ENCODE measurements at regions of chr19 and their contacts with region 1.

Region 1: DNA sequence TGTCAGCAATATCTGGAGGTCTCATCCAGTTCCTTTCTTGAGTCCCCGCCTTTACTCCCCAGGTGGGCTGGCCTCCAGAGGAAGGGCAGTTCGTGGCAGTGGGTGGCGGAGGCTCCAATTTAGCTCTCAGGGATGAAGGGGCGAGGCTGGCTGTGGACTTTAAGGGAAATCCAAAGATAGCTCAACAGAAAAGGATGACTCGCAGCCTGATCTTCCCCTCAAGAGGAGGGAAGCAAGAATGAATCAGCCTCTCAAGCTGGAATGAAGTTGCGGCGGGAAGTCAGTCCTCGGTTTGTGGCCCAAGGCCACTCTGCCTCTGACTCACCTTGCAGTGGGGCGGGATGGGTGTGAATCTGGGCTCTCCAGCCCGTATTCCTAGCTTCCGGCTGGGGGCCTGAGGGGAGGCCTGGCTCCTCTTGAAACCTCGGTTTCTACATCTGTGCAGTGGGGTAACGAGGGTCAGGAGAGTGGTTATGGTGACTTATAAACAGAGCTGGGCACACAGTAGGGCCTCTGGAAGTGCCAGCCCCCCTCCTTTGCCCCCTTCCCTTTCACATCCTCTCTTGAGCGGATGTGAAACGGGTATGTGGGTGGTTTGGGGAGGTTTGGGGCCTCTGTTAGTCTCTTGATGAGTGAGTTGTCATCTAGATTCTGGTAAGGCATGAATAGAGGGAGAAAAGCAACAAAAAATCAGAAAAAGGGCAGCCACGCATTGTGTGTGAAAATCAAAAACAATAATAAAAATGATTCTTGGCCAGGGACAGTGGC is 10.5 kb upstream of the SMG9 start:
- DNase-seq: peak; percentile 88
- H3K4me3 ChIP-seq: peak overlapping the region; percentile 56
- H3K27ac ChIP-seq: peak overlapping the region; percentile 96
- H3K4me1 ChIP-seq: peaks cover 74% of the 10 kb centered on the region
- CTCF ChIP-seq: no peak

Region 2: DNA sequence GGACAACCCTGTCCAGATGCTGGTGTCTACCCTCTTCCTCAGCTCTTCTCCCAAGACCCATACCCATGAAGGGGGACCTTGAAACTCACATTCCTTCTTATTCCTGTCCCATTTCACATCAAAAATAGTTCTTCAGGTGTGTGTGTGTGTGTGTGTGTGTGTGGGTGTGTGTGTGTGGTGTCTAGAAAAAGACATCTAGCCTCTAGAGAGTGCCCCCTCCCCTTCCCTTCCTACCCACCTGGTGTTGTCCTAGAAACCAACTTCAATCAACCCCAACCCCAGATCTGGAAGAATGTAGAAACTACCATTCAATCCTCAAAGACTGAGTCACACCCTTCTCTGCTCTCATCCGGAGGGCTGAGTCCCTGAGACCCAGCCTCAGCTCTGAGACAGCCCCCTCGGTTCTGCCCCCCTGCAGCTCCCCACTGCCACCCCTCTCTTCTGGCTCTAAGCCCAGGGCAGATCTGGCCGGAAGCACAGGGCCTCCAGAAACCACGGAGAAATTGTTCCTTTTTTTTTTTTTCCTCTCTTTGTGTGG is 11.9 kb after region 1 on chr19:
- CTCF ChIA-PET with region 1: interaction called, 18 read pairs
- POLR2A ChIA-PET with region 1: interaction called, 49 read pairs
- intact Hi-C with region 1: loop called (anchors 1 kb)
- DNase-seq: peak; percentile 82
- H3K4me3 ChIP-seq: peak overlapping the region; percentile 78
- H3K27ac ChIP-seq: peak overlapping the region; percentile 91
- H3K4me1 ChIP-seq: peaks cover 68% of the 10 kb centered on the region
- CTCF ChIP-seq: no peak

Region 3: DNA sequence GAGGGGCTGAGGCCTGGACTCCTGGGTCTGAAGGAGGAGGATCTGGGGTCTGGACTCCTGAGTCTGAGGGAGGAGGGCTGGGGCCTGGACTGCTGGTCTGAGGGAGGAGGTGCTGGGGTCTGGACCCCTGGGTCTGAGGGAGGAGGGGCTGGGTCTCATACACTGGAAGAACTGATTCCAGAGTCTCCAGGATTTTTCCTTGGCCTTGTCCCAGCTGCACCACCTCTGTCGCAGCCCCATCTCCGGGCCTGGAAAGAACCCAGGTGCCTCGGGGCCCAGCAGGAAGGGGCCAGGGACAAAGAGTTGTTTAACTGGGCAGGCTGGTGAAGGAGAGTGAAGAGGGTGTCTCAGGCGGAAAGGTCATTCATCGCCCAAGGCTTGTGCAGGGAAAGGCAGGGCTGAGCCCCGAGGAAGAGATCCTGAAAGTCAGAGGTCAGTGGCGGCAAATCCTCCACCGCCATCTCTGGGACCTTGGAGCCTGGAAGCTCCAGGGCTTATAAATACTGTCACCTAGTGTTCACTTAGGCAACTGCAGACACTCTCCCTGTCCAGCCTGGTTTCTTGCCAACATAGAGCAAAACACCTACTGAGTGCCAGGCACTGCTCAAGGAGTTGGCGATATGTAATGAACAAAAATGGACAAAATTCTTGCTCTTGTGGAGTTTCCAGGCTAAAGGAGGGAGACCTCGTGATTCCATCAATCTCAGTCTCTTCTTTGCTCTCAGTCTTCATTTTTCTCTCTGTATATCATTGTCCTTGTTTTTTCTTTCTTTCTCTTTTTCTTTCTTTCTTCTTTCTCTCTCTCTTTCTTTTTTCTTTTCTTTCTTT is 19.9 kb after region 1 on chr19:
- CTCF ChIA-PET with region 1: interaction called, 3 read pairs
- POLR2A ChIA-PET with region 1: interaction called, 49 read pairs
- intact Hi-C with region 1: loop called (anchors 1 kb)
- DNase-seq: peak; percentile 86
- H3K4me3 ChIP-seq: peak overlapping the region; percentile 56
- H3K27ac ChIP-seq: peak overlapping the region; percentile 98
- H3K4me1 ChIP-seq: peaks cover 53% of the 10 kb centered on the region
- CTCF ChIP-seq: peak; percentile 97

Region 4: GRCh38 chr19:43842007-43842406 is 76.7 kb after region 1 on chr19:
- CTCF ChIA-PET with region 1: no interaction called
- POLR2A ChIA-PET with region 1: no interaction called
- intact Hi-C with region 1: no loop called
- DNase-seq: peak; percentile 1
- H3K4me3 ChIP-seq: no peak overlapping the region
- H3K27ac ChIP-seq: no peak overlapping the region
- H3K4me1 ChIP-seq: no peaks in the 10 kb centered on the region
- CTCF ChIP-seq: no peak

Region 5: GRCh38 chr19:44021221-44021620 is 255.9 kb after region 1 on chr19:
- CTCF ChIA-PET with region 1: no interaction called
- POLR2A ChIA-PET with region 1: no interaction called
- intact Hi-C with region 1: no loop called
- DNase-seq: no peak
- H3K4me3 ChIP-seq: no peak overlapping the region
- H3K27ac ChIP-seq: no peak overlapping the region
- H3K4me1 ChIP-seq: no peaks in the 10 kb centered on the region
- CTCF ChIP-seq: no peak